Endothelial cell of umbilical vein (primary cell): ENCODE measurements at regions of chr2 and their contacts with region 1.

Region 1: DNA sequence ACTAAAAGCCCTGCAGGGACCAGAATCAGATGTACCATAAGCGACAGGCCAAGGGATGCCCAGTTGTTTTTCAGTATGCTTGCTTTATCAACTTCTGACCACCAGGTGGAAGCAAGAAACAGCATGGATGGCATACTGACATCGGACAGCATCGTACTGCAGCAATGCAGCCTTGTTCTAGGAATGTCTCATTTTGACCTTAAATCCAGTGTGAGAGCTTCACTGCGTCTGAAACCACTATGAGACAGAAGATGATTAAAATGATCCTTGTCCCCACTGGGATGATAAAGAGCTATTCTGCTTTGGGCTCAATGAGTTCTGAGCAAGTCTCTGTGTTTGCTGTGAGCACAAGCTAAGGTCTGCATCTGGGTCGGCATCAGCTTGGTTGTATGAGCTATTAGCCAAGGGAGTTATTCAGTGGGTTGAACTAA is 54.3 kb downstream of the CDK15 start:
- DNase-seq: peak; percentile 81
- H3K4me3 ChIP-seq: no peak overlapping the region
- H3K27ac ChIP-seq: no peak overlapping the region
- H3K4me1 ChIP-seq: peaks cover 15% of the 10 kb centered on the region
- H3K27me3 ChIP-seq: peaks cover 4 to 11% of the 10 kb centered on the region in 2 experiments
- CTCF ChIP-seq: peak; percentile 69 to 74
- POLR2A ChIP-seq: no peak

Region 2: DNA sequence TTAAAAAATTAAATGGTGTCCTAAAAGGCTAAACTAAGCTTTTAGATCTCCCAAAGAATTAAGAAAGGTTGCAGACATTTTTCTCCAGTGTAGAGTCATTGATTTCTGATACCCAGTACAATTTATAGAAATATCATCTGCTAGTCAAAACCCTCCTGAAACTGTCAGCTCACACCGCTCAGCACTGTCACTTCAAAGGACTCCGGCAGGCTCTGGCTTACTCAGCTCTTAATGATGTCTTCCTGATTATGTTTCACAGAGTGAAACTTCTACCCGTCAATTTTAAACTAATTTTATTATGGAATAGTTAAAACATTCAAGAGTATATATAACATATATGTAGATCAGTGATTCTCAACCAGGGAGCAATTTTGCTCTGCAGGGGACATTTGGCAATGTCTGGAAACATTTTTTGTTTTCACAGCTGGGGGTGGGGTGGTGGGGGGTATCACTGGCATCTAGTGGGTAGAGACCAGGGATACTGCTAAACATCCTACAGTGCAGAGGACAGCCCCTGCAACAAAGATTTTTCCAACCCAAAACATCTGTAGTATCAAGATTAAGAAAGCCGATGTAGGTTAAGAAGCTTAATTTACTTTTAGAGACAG is 22.7 kb before region 1 on chr2:
- CTCF ChIA-PET with region 1: no interaction called
- POLR2A ChIA-PET with region 1: no interaction called
- dilution Hi-C with region 1: no loop called
- intact Hi-C with region 1: no loop called
- DNase-seq: no peak
- H3K4me3 ChIP-seq: no peak overlapping the region
- H3K27ac ChIP-seq: no peak overlapping the region
- H3K4me1 ChIP-seq: no peaks in the 10 kb centered on the region
- H3K27me3 ChIP-seq: peaks cover 2 to 8% of the 10 kb centered on the region in 2 experiments
- CTCF ChIP-seq: no peak
- POLR2A ChIP-seq: no peak

Region 3: DNA sequence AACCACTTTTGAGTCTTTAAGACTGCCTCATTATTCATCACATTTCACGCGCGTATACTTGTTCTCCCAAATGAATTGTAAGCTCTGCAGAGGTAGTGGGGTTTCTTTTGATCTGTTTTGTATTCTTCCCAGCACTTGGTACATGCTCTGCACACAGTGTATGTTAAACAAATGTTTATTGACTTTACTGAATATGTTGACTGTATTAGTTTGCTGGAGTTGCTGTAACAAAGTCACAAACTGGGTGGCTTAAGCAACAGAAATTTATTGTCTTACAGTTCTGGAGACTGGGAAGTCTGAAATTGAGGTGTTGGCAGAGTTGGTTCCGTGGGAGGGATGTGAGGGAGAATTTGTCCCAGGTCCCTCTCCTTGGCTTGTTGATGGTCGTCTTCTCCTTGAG is 10.8 kb after region 1 on chr2:
- CTCF ChIA-PET with region 1: interaction called, 15 read pairs
- POLR2A ChIA-PET with region 1: no interaction called
- dilution Hi-C with region 1: no loop called
- intact Hi-C with region 1: no loop called
- DNase-seq: no peak
- H3K4me3 ChIP-seq: no peak overlapping the region
- H3K27ac ChIP-seq: no peak overlapping the region
- H3K4me1 ChIP-seq: peaks cover 7% of the 10 kb centered on the region
- H3K27me3 ChIP-seq: peaks cover 2 to 8% of the 10 kb centered on the region in 2 experiments
- CTCF ChIP-seq: no peak
- POLR2A ChIP-seq: no peak

Region 4: DNA sequence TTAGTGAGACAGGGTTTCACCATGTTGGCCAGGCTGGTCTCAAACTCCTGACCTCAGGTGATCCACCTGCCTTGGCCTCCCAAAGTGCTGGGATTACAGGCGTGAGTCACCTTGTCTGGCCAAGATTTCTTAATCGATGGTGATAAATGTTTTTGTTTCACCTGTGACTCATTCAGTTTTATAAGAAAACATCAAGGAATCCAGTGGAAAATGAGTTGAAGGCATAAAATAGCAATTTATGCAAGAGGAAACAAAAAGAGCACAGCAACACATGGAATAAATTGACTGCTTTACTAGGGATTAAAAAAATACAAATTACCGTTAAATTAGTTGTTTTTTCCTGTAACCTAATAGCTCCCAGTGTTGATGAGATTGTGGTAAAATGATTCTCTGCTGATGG is 25.9 kb after region 1 on chr2:
- CTCF ChIA-PET with region 1: interaction called, 22 read pairs
- POLR2A ChIA-PET with region 1: no interaction called
- dilution Hi-C with region 1: no loop called
- intact Hi-C with region 1: no loop called
- DNase-seq: no peak
- H3K4me3 ChIP-seq: no peak overlapping the region
- H3K27ac ChIP-seq: no peak overlapping the region
- H3K4me1 ChIP-seq: no peaks in the 10 kb centered on the region
- H3K27me3 ChIP-seq: peaks cover 33 to 57% of the 10 kb centered on the region in 2 experiments
- CTCF ChIP-seq: no peak
- POLR2A ChIP-seq: no peak

Region 5: DNA sequence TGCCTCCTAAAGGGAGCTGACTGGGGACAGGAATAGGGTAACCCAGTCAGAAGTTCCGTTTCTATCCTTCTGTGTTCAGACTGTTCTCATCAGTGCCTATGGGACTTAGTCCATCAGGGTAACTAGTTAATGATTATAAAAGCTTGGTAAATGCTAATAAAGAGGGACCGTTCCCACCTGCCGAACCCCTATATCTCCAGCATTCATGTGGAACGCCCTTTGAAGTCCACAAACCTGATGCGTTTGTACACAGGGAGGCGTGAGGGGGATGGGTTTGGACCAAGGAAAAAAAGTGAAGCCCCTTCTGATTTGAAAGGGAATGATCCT is 58.6 kb after region 1 on chr2:
- CTCF ChIA-PET with region 1: no interaction called
- POLR2A ChIA-PET with region 1: no interaction called
- dilution Hi-C with region 1: no loop called
- intact Hi-C with region 1: no loop called
- DNase-seq: no peak
- H3K4me3 ChIP-seq: no peak overlapping the region
- H3K27ac ChIP-seq: no peak overlapping the region
- H3K4me1 ChIP-seq: no peaks in the 10 kb centered on the region
- H3K27me3 ChIP-seq: peaks cover 10 to 13% of the 10 kb centered on the region in 2 experiments
- CTCF ChIP-seq: no peak
- POLR2A ChIP-seq: no peak

Region 6: DNA sequence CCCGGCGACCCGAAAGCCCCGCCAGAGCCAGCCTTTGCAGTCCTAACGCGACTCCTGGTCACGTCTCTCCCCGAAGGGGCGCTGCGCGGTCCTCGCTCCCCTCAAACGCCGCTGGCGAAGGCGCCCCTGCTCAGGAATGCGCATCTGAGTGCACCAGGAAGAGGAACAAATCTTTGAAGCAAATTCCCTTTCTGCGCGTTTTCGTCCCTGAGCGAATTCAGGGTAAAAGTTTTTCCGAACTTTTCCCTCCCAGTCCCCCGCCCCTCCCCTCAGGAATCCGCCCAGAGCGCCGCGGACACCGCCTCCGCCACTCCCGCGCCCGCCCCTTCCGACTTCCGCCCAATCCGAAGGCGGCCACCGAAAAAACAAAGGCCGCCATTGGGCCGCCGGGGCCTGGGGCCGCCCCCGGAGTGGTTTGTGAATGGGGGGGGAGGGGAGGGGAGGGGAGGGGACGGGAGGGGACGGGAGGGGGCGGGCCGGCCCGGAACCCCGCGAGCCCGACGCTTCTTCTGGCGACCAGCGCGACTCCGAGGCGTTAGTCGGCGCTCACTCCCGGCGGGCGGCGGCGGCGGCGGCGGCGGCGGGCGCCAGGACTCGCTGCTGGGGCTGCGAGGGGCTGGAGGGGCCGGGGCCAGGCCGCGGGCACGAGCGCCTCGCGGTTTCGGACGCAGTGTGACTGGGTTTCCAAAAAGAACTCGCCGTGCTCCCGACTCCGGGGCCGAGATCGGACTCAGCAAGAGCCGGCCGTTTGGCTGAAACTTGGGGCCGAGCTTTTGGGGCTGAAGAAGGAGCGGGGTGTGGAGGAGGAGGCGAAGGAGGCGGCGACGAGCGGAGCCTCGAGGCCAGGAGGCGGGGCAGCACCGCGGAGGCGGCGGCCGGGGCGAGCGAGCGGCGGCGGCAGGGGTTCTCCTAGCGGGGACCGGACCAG is 172.9 kb after region 1 on chr2 and contains the start of gene FZD7:
- CTCF ChIA-PET with region 1: no interaction called
- POLR2A ChIA-PET with region 1: no interaction called
- dilution Hi-C with region 1: no loop called
- intact Hi-C with region 1: loop called (anchors 2 kb)
- DNase-seq: peak; percentile 71
- H3K4me3 ChIP-seq: peak within 1 kb of the TSS; percentile 49 to 77 (median 62)
- H3K27ac ChIP-seq: no peak within 1 kb of the TSS
- H3K4me1 ChIP-seq: peaks cover 10% of the 10 kb centered on the region
- H3K27me3 ChIP-seq: peaks cover 64 to 81% of the 10 kb centered on the region in 2 experiments
- CTCF ChIP-seq: peak in 1 of 2 donors; percentile 18
- POLR2A ChIP-seq: no peak
- total RNA-seq, gene FZD7: 0.23 and 0.29 TPM in 2 replicates

Region 7: DNA sequence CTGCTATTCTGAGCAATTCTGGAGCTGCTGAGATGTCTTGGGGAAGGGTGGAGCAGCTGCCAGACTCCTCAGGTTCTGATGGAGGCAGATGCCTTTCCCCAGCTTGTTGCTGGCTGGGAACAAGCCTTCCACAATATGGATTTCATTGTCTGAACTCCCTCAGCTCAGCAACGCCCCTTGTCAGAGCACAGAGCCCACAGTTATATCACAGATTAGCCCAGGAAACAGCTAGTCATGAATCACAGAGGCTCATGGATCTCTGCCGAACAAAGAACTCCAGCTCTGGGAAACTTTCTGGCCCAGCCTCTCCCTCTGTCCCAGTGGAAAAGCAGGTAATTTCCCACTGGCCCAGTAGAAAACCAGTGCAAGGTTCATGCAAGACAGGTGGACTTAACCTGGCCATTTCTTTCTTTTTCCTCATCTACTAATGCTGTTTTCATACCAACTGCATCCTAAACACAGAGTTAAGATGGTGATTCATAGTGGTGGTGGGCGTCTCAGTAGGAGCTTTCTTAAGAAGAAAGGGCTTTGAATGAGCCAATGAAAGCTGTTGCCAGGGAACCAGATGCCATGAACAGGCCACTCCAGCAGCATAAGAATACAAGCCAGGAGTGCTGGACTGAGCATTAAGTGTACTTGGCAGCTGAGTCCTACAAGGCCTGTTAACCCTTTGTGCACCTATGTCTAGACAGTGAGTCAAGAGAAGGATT is 203.7 kb after region 1 on chr2:
- CTCF ChIA-PET with region 1: interaction called, 15 read pairs
- POLR2A ChIA-PET with region 1: no interaction called
- dilution Hi-C with region 1: no loop called
- intact Hi-C with region 1: no loop called
- DNase-seq: no peak
- H3K4me3 ChIP-seq: no peak overlapping the region
- H3K27ac ChIP-seq: no peak overlapping the region
- H3K4me1 ChIP-seq: no peaks in the 10 kb centered on the region
- H3K27me3 ChIP-seq: peaks cover 0 to 10% of the 10 kb centered on the region in 2 experiments
- CTCF ChIP-seq: no peak
- POLR2A ChIP-seq: no peak

Region 8: DNA sequence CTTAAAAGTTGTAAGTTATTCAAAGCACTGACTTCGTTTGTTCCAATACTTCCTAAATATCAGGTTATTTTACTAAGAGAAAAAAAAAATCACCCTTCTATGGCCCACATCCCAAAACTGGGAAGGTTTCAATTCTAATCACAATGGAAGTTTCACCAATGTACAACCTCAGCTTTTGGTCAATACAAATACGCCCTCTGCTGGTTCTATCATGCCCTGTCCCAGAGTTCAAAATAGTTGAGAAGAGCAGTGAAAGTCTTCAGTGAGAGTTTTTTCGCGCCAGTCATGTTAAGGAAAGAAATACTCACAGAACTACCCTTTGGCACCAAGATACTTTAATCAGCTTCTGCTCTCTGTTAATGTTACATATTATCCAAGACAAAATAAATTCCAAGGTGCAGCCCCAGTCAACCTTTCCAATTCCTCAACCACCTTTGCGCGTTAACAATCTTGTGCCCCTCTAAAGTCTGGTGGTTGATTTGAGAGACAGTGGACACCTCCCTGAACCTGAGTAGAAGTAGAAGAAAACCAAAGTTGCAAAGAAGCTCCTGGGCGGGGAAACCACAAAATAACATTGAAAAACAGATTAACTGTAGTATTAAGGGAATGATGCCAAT is 317.8 kb after region 1 on chr2:
- CTCF ChIA-PET with region 1: interaction called, 92 read pairs
- POLR2A ChIA-PET with region 1: no interaction called
- dilution Hi-C with region 1: no loop called
- intact Hi-C with region 1: loop called (anchors 1 kb)
- DNase-seq: peak; percentile 70
- H3K4me3 ChIP-seq: no peak overlapping the region
- H3K27ac ChIP-seq: no peak overlapping the region
- H3K4me1 ChIP-seq: no peaks in the 10 kb centered on the region
- H3K27me3 ChIP-seq: no peaks in the 10 kb centered on the region
- CTCF ChIP-seq: peak; percentile 67 to 79
- POLR2A ChIP-seq: no peak